Posterior vena cava (tissue), 2 donors: ENCODE measurements at regions of chr22 and their contacts with region 1.

Region 1: DNA sequence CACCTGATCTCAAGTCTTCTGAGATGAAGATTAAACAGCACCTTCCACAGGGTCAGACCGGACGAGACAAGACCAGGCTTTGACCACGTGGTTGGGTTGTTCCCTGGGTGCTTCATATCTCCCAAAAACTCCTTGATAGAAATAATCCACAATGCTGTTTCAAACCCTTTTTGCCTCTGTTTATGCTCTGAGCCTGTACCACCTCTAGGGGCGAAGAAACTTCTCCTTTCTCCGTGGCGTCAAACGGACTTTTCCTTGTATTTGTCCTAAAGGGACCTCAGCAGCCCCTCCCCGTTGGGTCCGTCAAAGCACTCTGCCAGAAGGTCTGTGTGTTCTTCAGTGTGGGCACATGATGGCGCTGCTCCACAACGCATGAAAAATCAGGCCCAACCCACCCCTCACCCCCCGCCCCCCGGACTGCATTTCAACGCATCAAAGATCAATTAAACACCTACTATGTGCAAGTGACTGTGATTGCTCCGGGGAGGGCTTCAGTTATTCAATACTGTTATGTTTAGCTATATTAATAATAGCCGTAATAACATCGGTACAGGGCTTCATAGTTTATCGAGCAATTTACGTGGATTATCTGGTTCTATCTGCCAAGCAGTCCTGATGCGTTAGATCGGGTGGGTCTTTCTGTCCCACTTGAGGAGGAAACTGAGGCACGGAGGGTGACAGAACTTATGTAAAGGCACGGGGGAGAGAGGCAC is 17.3 kb upstream of the EIF3D start:
- DNase-seq: no peak

Region 2: DNA sequence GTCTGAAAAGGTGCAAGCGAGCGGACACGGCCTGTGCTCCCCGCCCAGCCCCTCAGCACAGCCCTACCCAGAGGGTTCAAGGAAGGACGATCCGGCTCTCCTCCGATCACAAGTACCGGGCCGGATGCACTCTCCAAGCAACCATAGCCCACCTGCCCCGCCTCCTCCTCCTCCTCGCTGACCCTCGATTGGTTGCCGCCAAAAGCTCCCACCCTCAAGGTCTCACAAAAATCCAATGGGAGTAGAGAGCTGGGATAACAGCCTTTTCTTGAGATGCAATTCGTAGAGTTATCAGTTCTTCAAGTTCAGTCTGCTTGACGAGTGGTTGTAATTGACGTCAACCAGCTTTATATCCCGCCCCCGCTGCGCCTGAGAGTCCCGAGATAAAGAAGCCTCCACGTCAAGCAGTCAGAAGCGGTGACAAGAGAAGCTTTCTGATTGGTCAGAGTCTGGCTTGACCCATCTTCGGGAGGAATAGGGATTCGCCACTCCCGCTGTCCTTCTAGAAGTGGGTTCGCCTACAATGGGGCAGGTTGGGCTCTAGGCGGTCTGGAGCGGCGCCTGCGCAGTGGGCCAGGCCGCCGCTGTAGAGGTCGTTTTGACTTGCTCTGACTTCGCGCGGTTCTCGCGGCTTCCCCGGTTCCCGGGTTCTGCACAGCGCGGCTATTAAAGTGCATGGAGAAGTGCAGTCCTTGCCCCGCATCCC is 229.9 kb after region 1 on chr22 and contains the start of gene IFT27:
- intact Hi-C with region 1: loop called (anchors 5 to 10 kb)
- DNase-seq: peak; percentile 99
- total RNA-seq, gene IFT27: 12.3 to 18.6 TPM

Region 3: GRCh38 chr22:36781656-36782627 is 235.7 kb after region 1 on chr22:
- intact Hi-C with region 1: loop called (anchors 5 to 10 kb)
- DNase-seq: peak; percentile 94

Region 4: DNA sequence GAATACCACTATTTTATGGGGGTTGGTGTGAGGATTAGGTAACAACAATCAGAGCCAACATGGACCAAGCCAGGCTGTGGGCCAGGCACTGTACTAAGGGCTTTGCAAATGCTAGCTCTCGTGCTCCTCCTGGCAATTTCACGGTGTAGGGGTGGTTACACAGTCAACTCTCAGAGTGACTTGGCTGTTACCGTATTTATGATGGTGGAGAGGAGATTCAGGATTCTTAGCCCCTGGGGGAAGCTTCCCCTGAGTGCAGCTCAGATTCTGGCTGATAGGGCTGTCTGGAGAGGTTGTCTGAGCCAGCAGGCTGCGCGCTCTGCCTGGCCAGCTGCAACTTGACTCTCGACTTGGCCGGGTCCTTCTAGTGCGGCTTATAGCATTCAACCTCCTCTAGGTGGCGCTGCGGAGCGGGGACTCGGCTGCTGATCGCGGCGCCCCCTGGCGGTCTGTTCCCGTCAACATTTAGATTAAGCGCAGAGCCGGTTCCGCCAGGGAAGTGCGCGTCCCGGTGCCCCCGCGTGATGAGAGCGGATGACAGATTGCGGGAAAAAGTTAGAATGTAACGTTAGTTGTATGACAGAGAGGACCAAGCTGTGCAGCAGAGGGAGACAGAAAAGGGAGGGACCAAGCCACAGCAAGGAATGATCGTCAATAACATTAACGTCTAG is 310.0 kb after region 1 on chr22:
- intact Hi-C with region 1: loop called (anchors 5 kb)
- DNase-seq: peak; percentile 98